Common myeloid progenitor, CD34-positive (primary cell): ENCODE measurements at regions of chr20 and their contacts with region 1.

Region 1: DNA sequence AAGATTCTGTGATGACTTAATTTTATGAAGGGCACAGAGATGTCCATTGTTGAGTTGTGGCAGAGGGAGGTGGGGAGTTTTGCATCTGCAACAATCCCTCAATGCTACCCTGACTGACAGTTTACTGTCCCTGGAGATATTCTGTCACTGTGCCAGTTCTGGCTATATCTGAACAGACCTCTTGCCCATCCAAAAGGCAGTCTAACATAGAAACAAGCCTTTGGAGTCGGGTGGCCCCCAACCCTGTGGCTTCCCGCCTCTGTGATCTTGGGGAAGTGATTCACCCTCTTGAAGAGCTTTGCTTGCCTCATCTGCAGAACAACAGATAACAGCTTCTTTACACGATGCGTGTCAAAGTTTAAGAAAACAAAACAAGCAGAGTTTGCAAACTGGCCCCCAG is 3.8 kb upstream of the E2F1 start:
- DNase-seq: peak; percentile 60 to 91 (median 82)
- H3K4me3 ChIP-seq: no peak overlapping the region
- H3K27ac ChIP-seq: no peak overlapping the region
- H3K4me1 ChIP-seq: peaks cover 0 to 41% (median 19%) of the 10 kb centered on the region in 4 experiments
- H3K27me3 ChIP-seq: no peaks in the 10 kb centered on the region

Region 2: DNA sequence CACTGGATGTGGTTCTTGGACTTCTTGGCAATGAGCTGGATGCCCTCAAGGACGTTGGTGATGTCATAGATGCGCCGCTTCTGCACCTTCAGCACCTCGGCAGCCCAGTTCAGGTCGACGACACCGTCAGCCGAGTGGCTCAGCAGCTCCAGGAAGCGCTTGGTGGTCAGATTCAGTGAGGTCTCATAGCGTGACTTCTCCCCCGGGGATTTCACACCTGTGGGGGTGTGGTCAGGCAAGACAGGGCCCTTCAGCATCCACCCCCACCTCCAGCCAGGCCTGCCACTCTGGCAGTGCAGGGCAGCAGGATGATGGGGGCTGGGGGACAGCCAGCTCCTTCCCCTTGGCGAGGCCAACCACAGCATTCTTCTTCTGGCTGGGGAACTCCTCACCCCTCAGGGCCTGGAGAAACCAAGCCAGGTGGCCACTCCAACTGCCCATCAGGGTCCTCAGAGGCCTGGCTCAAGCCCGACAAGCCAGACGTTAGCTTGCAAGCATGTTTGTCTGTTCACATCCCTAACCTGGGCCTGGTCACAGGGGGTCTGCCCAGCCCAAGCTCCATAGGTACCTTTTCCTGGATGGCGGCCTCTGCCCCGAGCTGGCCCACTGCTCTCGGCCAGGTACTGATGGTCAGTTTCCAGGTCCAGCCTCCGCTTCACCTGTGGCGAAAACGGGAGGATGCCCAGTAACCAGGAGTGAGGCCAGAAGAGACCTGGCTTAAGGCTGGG is 10.1 kb before region 1 on chr20:
- CTCF ChIA-PET with region 1: interaction called, 3 read pairs
- POLR2A ChIA-PET with region 1: interaction called, 12 read pairs
- DNase-seq: no peak
- H3K4me3 ChIP-seq: no peak overlapping the region
- H3K27ac ChIP-seq: no peak overlapping the region
- H3K4me1 ChIP-seq: peaks cover 0 to 14% (median 8%) of the 10 kb centered on the region in 4 experiments
- H3K27me3 ChIP-seq: no peaks in the 10 kb centered on the region